CD4-positive, alpha-beta T cell (primary cell): ENCODE measurements at regions of chr1 and their contacts with region 1.

Region 1: DNA sequence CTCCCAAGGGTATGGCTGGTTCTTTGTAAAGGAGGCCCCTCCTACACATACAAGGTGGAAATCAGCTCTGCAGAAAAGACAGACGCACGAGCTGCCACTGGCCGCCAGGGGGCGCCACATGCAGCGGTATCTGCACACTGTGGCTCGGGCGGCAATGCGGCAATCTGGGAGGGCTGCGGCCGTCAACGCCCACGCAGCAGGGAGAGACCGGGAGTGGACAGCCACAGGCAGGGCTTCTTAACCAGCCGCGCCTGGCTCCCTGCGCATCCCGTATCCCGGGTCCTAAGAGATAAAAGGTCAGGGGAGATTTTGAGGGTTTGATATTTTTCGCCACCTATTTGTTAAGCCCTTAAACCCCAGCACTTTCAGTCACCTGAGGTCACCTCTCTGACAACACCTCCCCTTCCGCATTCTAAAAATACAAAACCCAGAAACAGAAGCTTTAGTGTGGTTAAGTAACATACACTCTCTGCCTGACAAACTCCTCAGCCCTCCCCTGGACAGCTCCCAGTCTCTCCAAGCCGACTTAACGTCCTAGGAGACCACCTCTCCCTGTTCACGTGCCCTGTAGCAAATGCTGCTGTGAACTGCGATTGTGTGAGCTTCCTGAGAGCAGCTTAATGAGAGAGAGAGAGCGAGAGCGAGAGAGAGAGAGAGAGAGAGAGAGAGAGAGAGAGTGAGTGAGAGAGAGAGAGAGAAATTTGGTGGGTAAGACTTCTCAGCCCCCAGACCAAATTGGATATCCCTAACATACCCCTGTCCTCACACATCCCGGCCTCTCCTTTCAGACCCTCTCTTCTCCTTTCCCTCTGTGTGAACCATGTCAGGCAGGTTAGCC is 13.5 kb upstream of the KCNA2 start:
- DNase-seq: peak; percentile 82 to 95 (median 89)
- ATAC-seq: peak; percentile 84
- H3K4me3 ChIP-seq: peak overlapping the region; percentile 69
- H3K4me3 Mint-ChIP-seq: peak overlapping the region; percentile 86
- H3K27ac ChIP-seq: peak overlapping the region; percentile 46 to 69
- H3K27ac Mint-ChIP-seq: peak overlapping the region; percentile 87
- H3K4me1 ChIP-seq: peaks cover 34% of the 10 kb centered on the region
- H3K4me1 Mint-ChIP-seq: peaks cover 46% of the 10 kb centered on the region
- H3K27me3 ChIP-seq: no peaks in the 10 kb centered on the region
- H3K27me3 Mint-ChIP-seq: no peaks in the 10 kb centered on the region
- CTCF ChIP-seq: peak; percentile 96

Region 2: DNA sequence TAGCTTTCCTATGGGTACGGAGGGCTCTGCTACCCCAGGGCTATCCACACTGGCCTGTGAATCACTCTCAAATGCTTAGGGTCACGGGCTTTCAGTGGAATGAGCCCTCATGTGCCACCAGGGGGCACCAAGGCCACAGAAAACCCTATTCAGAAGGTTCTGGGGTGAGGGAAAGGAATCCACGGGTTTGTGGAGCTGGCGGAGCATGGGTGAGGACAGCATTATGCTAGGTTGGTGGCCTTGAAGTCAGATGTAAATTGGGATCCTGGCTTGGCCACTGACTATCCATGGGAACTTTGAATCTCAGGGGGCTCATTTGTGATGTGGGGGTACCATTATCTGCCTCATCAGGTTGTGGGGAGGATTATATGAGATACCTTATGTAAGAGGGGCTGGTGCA is 207.1 kb before region 1 on chr1:
- CTCF ChIA-PET with region 1: no interaction called
- POLR2A ChIA-PET with region 1: interaction called, 3 read pairs
- intact Hi-C with region 1: loop called in 1 of 2 experiments (anchors 5 kb)
- DNase-seq: peak; percentile 24 to 81 (median 52)
- ATAC-seq: peak; percentile 57
- H3K4me3 ChIP-seq: no peak overlapping the region
- H3K4me3 Mint-ChIP-seq: no peak overlapping the region
- H3K27ac ChIP-seq: no peak overlapping the region
- H3K27ac Mint-ChIP-seq: no peak overlapping the region
- H3K4me1 ChIP-seq: peaks cover 15% of the 10 kb centered on the region
- H3K4me1 Mint-ChIP-seq: peaks cover 18% of the 10 kb centered on the region
- H3K27me3 ChIP-seq: no peaks in the 10 kb centered on the region
- H3K27me3 Mint-ChIP-seq: no peaks in the 10 kb centered on the region
- CTCF ChIP-seq: peak; percentile 77

Region 3: DNA sequence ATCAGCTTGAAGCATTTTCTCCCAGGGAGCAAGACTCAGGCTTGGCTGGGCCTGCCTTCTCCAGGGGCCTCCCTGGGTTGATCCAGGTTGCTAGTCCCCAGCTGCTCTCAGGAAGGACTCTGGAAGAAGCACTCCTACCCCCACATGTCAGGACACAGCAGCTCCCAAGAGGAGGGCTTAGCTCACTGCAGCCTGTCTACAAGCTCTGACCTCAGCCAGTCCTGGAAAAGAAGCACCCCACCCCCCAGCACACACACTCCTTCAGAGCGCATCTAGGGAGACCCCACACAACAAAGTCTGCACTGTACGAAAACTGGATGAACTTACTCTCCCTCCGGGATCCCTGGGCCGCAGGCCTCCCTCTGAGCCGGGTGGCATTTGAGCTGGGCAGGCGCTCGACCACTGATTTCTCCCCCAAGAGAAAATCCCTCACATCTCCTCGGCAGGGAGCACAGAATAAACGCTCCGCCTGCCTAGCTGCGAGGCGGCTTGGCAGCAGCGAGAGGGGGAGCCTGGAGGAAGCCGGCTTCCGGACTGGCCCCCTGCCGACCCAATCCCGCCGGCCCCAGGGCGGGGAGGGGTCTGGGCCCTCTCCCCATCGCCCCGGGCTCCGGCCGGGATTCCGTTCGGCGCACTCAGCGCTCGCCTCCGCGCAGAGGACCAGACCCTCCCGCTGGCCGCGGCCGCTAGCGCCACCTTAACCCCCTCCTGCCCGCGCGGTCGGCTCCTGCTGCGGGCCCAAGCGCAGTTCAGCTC is 13.6 kb before region 1 on chr1 and contains the start of gene KCNA2:
- CTCF ChIA-PET with region 1: interaction called, 22 read pairs
- POLR2A ChIA-PET with region 1: interaction called, 15 read pairs
- intact Hi-C with region 1: no loop called
- DNase-seq: peak in 1 of 14 experiments; percentile 7
- ATAC-seq: peak; percentile 22
- H3K4me3 ChIP-seq: peak within 1 kb of the TSS; percentile 64
- H3K4me3 Mint-ChIP-seq: peak within 1 kb of the TSS; percentile 77
- H3K27ac ChIP-seq: no peak within 1 kb of the TSS
- H3K27ac Mint-ChIP-seq: no peak within 1 kb of the TSS
- H3K4me1 ChIP-seq: peaks cover 26% of the 10 kb centered on the region
- H3K4me1 Mint-ChIP-seq: peaks cover 9% of the 10 kb centered on the region
- H3K27me3 ChIP-seq: peaks cover 45 to 53% of the 10 kb centered on the region in 2 experiments
- H3K27me3 Mint-ChIP-seq: peaks cover 72% of the 10 kb centered on the region
- CTCF ChIP-seq: no peak
- total RNA-seq, gene KCNA2: 0.78 to 0.88 TPM

Region 4: GRCh38 chr1:110645821-110646735 is 26.4 kb after region 1 on chr1:
- CTCF ChIA-PET with region 1: interaction called, 8 read pairs
- POLR2A ChIA-PET with region 1: interaction called, 13 read pairs
- intact Hi-C with region 1: no loop called
- DNase-seq: peak in 3 of 14 experiments; percentile 45 to 71 (median 62)
- ATAC-seq: no peak
- H3K4me3 ChIP-seq: no peak overlapping the region
- H3K4me3 Mint-ChIP-seq: peak overlapping the region; percentile 43
- H3K27ac ChIP-seq: no peak overlapping the region
- H3K27ac Mint-ChIP-seq: no peak overlapping the region
- H3K4me1 ChIP-seq: peaks cover 77% of the 10 kb centered on the region
- H3K4me1 Mint-ChIP-seq: peaks cover 46% of the 10 kb centered on the region
- H3K27me3 ChIP-seq: no peaks in the 10 kb centered on the region
- H3K27me3 Mint-ChIP-seq: no peaks in the 10 kb centered on the region
- CTCF ChIP-seq: no peak

Region 5: GRCh38 chr1:110686188-110686587 is 66.6 kb after region 1 on chr1:
- CTCF ChIA-PET with region 1: interaction called, 17 read pairs
- POLR2A ChIA-PET with region 1: interaction called, 6 read pairs
- intact Hi-C with region 1: no loop called
- DNase-seq: peak in 12 of 14 experiments; percentile 8 to 71 (median 32)
- ATAC-seq: peak; percentile 79
- H3K4me3 ChIP-seq: no peak overlapping the region
- H3K4me3 Mint-ChIP-seq: no peak overlapping the region
- H3K27ac ChIP-seq: no peak overlapping the region
- H3K27ac Mint-ChIP-seq: no peak overlapping the region
- H3K4me1 ChIP-seq: peaks cover 4% of the 10 kb centered on the region
- H3K4me1 Mint-ChIP-seq: no peaks in the 10 kb centered on the region
- H3K27me3 ChIP-seq: no peaks in the 10 kb centered on the region
- H3K27me3 Mint-ChIP-seq: no peaks in the 10 kb centered on the region
- CTCF ChIP-seq: peak; percentile 58

Region 6: DNA sequence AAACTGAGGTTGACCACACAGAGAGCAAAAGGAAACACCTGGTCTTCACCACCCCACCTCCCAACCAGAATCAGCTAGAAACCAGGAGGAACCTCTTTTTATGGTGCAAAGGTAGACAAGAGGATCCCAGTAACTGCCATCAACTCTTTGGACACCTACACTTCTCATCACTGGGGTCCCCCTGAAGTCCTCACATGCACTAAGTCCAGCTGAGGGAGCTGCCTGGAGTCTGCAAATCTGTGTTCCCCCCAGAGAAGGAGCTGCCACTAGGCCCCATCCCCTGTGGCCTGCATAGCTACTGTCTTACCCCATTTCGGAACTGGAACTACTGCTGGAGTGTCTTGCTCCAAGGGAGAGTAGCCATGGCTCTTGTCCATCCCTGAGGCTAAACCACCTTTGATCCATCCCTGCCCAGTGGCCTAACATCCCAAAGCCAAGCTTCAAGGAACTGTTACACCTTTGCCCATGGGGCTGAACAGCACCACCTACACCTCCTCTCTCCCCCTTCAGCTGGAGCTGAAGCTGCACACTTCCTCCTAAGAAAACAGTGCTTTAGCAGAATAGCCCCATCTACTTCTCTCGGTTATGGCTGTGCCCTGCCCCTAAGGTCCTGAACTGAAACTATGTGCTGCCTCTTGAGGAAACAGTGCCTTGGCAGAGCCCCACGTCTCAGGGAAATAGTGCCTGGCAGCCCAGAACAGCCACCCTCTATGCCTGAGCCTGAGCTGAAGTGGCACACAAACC is 167.9 kb after region 1 on chr1:
- CTCF ChIA-PET with region 1: interaction called, 36 read pairs
- POLR2A ChIA-PET with region 1: interaction called, 30 read pairs
- intact Hi-C with region 1: loop called in 1 of 2 experiments (anchors 1 kb)
- DNase-seq: peak in 11 of 14 experiments; percentile 4 to 87 (median 41)
- ATAC-seq: peak; percentile 71
- H3K4me3 ChIP-seq: peak overlapping the region; percentile 35
- H3K4me3 Mint-ChIP-seq: peak overlapping the region; percentile 75
- H3K27ac ChIP-seq: peak overlapping the region; percentile 23 to 58
- H3K27ac Mint-ChIP-seq: peak overlapping the region; percentile 82
- H3K4me1 ChIP-seq: peaks cover 55% of the 10 kb centered on the region
- H3K4me1 Mint-ChIP-seq: peaks cover 77% of the 10 kb centered on the region
- H3K27me3 ChIP-seq: no peaks in the 10 kb centered on the region
- H3K27me3 Mint-ChIP-seq: no peaks in the 10 kb centered on the region
- CTCF ChIP-seq: no peak

Region 7: GRCh38 chr1:111203681-111204200 is 584.1 kb after region 1 on chr1:
- CTCF ChIA-PET with region 1: no interaction called
- POLR2A ChIA-PET with region 1: no interaction called
- intact Hi-C with region 1: loop called in 1 of 2 experiments (anchors 10 kb)
- DNase-seq: peak; percentile 52 to 93 (median 84)
- ATAC-seq: peak; percentile 39
- H3K4me3 ChIP-seq: peak overlapping the region; percentile 79
- H3K4me3 Mint-ChIP-seq: peak overlapping the region; percentile 99
- H3K27ac ChIP-seq: peak overlapping the region; percentile 70 to 97
- H3K27ac Mint-ChIP-seq: peak overlapping the region; percentile 90
- H3K4me1 ChIP-seq: peaks cover 50% of the 10 kb centered on the region
- H3K4me1 Mint-ChIP-seq: peaks cover 83% of the 10 kb centered on the region
- H3K27me3 ChIP-seq: no peaks in the 10 kb centered on the region
- H3K27me3 Mint-ChIP-seq: no peaks in the 10 kb centered on the region
- CTCF ChIP-seq: no peak